ENCODE measurements at regions of chr11 and their contacts with region 1.

Region 1: GRCh38 chr11:82900277-82901164 is at the start of gene PRCP:
- DNase-seq: peak; percentile 95 to 99
- H3K4me3 ChIP-seq: peak within 1 kb of the TSS; percentile 69
- CTCF ChIP-seq: no peak
- POLR2A ChIP-seq: peak in 1 of 2 donors; percentile 1
- total RNA-seq, gene PRCP: 31.5 to 56.8 (median 53.8) TPM

Region 2: GRCh38 chr11:82831364-82831763 is 69.2 kb before region 1 on chr11:
- intact Hi-C with region 1: no loop called
- DNase-seq: no peak
- H3K4me3 ChIP-seq: no peak overlapping the region
- CTCF ChIP-seq: no peak
- POLR2A ChIP-seq: no peak

Region 3: DNA sequence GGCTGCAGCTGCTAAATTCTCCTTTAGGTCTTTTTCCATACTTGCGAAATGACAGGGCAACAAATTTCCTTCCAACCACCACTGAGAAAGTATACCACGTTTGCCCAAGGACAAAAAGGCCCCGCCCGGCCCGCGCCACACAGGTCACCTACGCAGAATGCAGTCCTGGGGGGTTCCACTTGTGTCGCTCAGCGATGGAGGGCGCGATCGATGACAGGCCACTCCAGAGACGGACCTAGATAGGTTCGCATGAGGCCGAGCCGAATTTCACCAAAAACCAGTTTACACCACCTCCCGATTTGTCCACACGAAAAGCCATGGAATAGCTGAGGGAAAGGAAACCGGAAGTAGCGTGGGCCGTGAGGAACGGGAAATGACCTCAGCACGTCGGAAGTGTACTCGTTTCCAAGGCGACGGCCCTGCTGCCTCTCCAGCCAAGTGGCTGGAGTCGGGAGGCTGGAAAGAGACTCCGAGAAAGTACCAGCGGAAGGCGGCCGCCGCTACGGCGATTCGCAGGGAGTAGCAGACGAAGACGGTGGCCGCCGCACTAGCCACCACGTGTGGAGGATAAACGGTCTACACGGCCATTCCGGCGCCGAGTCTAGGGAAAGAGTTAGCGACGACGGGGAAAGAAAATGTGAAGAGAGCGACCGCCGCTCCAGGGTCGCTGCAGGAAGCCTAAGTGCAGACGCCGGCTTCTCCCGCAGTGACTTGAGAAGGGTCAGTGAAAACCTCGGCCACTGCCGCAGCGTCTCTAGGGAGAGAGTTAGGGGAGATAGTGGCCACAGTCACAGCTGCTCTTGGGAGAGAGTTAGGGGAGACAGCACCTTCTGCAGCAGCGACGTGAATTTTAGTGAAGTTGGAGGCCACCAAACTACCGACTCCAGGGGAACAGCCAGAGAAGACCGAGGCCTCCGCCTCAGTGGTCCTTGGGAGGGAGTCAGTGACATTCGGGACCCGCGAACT is 293.1 kb after region 1 on chr11 and contains the start of gene ANKRD42:
- intact Hi-C with region 1: loop called (anchors 10 kb)
- DNase-seq: peak; percentile 94 to 98
- H3K4me3 ChIP-seq: peak within 1 kb of the TSS; percentile 57
- CTCF ChIP-seq: no peak
- POLR2A ChIP-seq: peak in 1 of 2 donors; percentile 21
- total RNA-seq, gene ANKRD42: 7.1 to 9.8 (median 9.0) TPM